G401 (cell line): ENCODE measurements at regions of chr20 and their contacts with region 1.

Region 1: GRCh38 chr20:45890985-45891983 is at the starts of genes CTSA and NEURL2:
- DNase-seq: peak; percentile 91
- total RNA-seq, gene CTSA: 20.7 and 28.9 TPM in 2 replicates
- total RNA-seq, gene NEURL2: 6.6 and 7.0 TPM in 2 replicates

Region 2: GRCh38 chr20:45944172-45944964 is 53.1 kb after region 1 on chr20:
- in situ Hi-C with region 1: loop called (anchors 5 kb)
- DNase-seq: no peak